ENCODE measurements at regions of chr1 and their contacts with region 1.

Region 1: GRCh38 chr1:7646981-7647901 is 123.9 kb upstream of the VAMP3 start:
- DNase-seq: peak; percentile 62 to 85 (median 70)
- H3K4me3 ChIP-seq: no peak overlapping the region
- H3K27ac ChIP-seq: peak overlapping the region in 1 of 59 donors; percentile 27
- H3K27me3 ChIP-seq: no peaks in the 10 kb centered on the region
- CTCF ChIP-seq: peak; percentile 79 to 99 (median 96)

Region 2: GRCh38 chr1:6784560-6785317 is 862.5 kb before region 1 on chr1:
- intact Hi-C with region 1: loop called in 1 of 2 experiments (anchors 10 kb)
- DNase-seq: peak; percentile 98 to 100 (median 100)
- H3K4me3 ChIP-seq: peak overlapping the region; percentile 60 to 99 (median 87)
- H3K27ac ChIP-seq: peak overlapping the region; percentile 82 to 100 (median 96)
- H3K27me3 ChIP-seq: no peaks in the 10 kb centered on the region
- CTCF ChIP-seq: peak in 11 of 56 donors; percentile 2 to 19 (median 9)

Region 3: GRCh38 chr1:7070389-7071029 is 576.7 kb before region 1 on chr1:
- intact Hi-C with region 1: loop called (anchors 5 to 10 kb)
- DNase-seq: peak in 7 of 10 donors; percentile 48 to 69 (median 58)
- H3K4me3 ChIP-seq: peak overlapping the region in 58 of 59 donors; percentile 15 to 66 (median 40)
- H3K27ac ChIP-seq: peak overlapping the region in 3 of 59 donors; percentile 6 to 53 (median 46)
- H3K27me3 ChIP-seq: no peaks in the 10 kb centered on the region
- CTCF ChIP-seq: peak; percentile 62 to 88 (median 80)

Region 4: GRCh38 chr1:7299329-7299799 is 347.9 kb before region 1 on chr1:
- intact Hi-C with region 1: loop called in 1 of 2 experiments (anchors 5 kb)
- DNase-seq: peak; percentile 37 to 83 (median 68)
- H3K4me3 ChIP-seq: peak overlapping the region in 9 of 59 donors; percentile 9 to 35 (median 18)
- H3K27ac ChIP-seq: peak overlapping the region in 11 of 59 donors; percentile 8 to 55 (median 43)
- H3K27me3 ChIP-seq: no peaks in the 10 kb centered on the region
- CTCF ChIP-seq: no peak

Region 5: GRCh38 chr1:7667625-7668218 is 20.5 kb after region 1 on chr1:
- intact Hi-C with region 1: no loop called
- DNase-seq: peak; percentile 91 to 99 (median 95)
- H3K4me3 ChIP-seq: peak overlapping the region in 16 of 59 donors; percentile 1 to 43 (median 20)
- H3K27ac ChIP-seq: peak overlapping the region; percentile 72 to 99 (median 97)
- H3K27me3 ChIP-seq: no peaks in the 10 kb centered on the region
- CTCF ChIP-seq: peak; percentile 99 to 100 (median 100)

Measured in dorsolateral prefrontal cortex (tissue), 120 donors.